ENCODE measurements at regions of chr2 and their contacts with region 1.

Region 1: GRCh38 chr2:152175458-152176325 is at the start of gene STAM2:
- DNase-seq: peak; percentile 79 to 95 (median 93)
- ATAC-seq: peak; percentile 93
- H3K4me3 ChIP-seq: peak within 1 kb of the TSS; percentile 80
- H3K4me3 Mint-ChIP-seq: peak within 1 kb of the TSS; percentile 90 to 99 (median 96)
- H3K27ac ChIP-seq: peak within 1 kb of the TSS; percentile 91
- H3K27ac Mint-ChIP-seq: peak within 1 kb of the TSS; percentile 96 to 99 (median 99)
- H3K4me1 ChIP-seq: peaks cover 0 to 14% of the 10 kb centered on the region in 2 donors
- H3K4me1 Mint-ChIP-seq: peaks cover 22 to 46% (median 36%) of the 10 kb centered on the region in 7 donors
- H3K27me3 ChIP-seq: no peaks in the 10 kb centered on the region
- H3K27me3 Mint-ChIP-seq: peaks cover 0 to 7% (median 2%) of the 10 kb centered on the region in 5 donors
- total RNA-seq, gene STAM2: 12.6 to 22.2 (median 20.0) TPM

Region 2: DNA sequence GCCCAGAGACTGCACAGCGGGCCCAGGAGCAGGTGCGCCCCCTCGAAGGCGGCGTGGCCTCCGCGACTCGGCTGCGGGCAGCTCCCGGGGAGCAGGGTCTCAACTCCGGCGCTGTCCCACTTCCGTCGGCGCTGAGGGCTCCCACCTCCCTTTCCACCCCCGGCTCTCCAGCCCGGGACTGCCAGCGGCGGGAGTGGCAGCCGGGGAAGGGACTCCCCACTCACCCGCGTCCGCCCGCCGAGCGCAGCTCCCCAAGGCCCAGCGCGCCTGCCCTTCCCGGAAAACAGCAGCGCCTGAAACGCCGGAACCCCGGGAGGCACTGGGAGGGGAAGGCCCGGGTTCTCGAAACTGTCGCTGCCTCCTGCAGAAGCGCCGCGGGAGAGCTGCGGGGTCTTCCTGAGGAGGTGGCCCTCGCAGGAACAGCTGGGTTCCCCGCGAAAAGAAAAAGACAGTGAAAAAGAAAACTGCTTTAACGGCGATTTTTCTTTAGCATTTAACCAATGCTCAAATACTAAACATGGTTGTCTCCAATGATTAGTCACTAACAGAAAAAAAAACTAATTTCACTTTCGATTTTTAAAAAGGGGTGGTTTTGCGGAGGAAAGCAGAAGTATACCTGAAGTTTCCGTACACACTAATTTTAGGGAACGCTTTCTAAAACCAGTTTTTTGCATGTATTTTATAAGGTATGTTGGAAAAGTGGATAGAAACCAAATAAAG is 886.2 kb before region 1 on chr2 and contains the start of gene NMI:
- CTCF ChIA-PET with region 1: interaction called, 4 read pairs
- POLR2A ChIA-PET with region 1: interaction called, 3 read pairs
- intact Hi-C with region 1: loop called in 1 of 2 experiments (anchors 5 kb)
- DNase-seq: peak; percentile 47 to 84 (median 80)
- ATAC-seq: peak; percentile 79
- H3K4me3 ChIP-seq: peak within 1 kb of the TSS; percentile 76
- H3K4me3 Mint-ChIP-seq: peak within 1 kb of the TSS; percentile 85 to 99 (median 95)
- H3K27ac ChIP-seq: peak within 1 kb of the TSS; percentile 92
- H3K27ac Mint-ChIP-seq: peak within 1 kb of the TSS; percentile 94 to 100 (median 97)
- H3K4me1 ChIP-seq: peaks cover 18 to 22% of the 10 kb centered on the region in 2 donors
- H3K4me1 Mint-ChIP-seq: peaks cover 33 to 66% (median 48%) of the 10 kb centered on the region in 7 donors
- H3K27me3 ChIP-seq: no peaks in the 10 kb centered on the region
- H3K27me3 Mint-ChIP-seq: no peaks in the 10 kb centered on the region
- total RNA-seq, gene NMI: 14.9 to 69.9 (median 29.3) TPM

Region 3: GRCh38 chr2:151828143-151828889 is 347.4 kb before region 1 on chr2 and contains the start of gene ARL5A:
- CTCF ChIA-PET with region 1: no interaction called
- POLR2A ChIA-PET with region 1: interaction called, 3 read pairs
- intact Hi-C with region 1: loop called (anchors 1 to 2 kb)
- DNase-seq: peak; percentile 89 to 98 (median 96)
- ATAC-seq: peak; percentile 97
- H3K4me3 ChIP-seq: peak within 1 kb of the TSS; percentile 93
- H3K4me3 Mint-ChIP-seq: peak within 1 kb of the TSS; percentile 84 to 97 (median 92)
- H3K27ac ChIP-seq: peak within 1 kb of the TSS; percentile 87
- H3K27ac Mint-ChIP-seq: peak within 1 kb of the TSS; percentile 90 to 96 (median 92)
- H3K4me1 ChIP-seq: peaks cover 18 to 26% of the 10 kb centered on the region in 2 donors
- H3K4me1 Mint-ChIP-seq: peaks cover 30 to 52% (median 40%) of the 10 kb centered on the region in 7 donors
- H3K27me3 ChIP-seq: no peaks in the 10 kb centered on the region
- H3K27me3 Mint-ChIP-seq: peaks cover 0 to 6% (median 0%) of the 10 kb centered on the region in 5 donors
- total RNA-seq, gene ARL5A: 25.8 to 43.3 (median 32.3) TPM

Region 4: DNA sequence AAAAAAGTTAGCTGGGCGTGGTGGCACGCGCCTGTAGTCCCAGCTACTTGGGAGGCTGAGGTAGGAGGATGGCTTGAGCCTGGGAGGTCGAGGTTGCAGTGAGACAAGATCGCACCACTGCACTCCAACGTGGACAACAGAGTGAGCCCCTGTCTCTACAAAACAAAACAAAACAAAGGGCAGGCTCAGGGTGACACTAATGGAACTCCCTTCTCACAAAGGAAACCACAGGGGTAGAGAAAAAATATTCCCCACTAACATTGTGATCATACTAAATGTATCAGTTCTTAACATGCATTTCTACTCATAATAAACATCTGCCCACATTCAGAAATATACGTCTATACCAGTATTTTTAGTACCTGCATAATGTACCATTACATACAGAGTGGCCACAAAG is 21.2 kb before region 1 on chr2:
- CTCF ChIA-PET with region 1: no interaction called
- POLR2A ChIA-PET with region 1: no interaction called
- intact Hi-C with region 1: loop called in 1 of 2 experiments (anchors 1 kb)
- DNase-seq: no peak
- ATAC-seq: no peak
- H3K4me3 ChIP-seq: no peak overlapping the region
- H3K4me3 Mint-ChIP-seq: no peak overlapping the region
- H3K27ac ChIP-seq: no peak overlapping the region
- H3K27ac Mint-ChIP-seq: peak overlapping the region in 1 of 9 donors; percentile 19
- H3K4me1 ChIP-seq: no peaks in the 10 kb centered on the region
- H3K4me1 Mint-ChIP-seq: peaks cover 11 to 42% (median 28%) of the 10 kb centered on the region in 7 donors
- H3K27me3 ChIP-seq: no peaks in the 10 kb centered on the region
- H3K27me3 Mint-ChIP-seq: no peaks in the 10 kb centered on the region

Region 5: DNA sequence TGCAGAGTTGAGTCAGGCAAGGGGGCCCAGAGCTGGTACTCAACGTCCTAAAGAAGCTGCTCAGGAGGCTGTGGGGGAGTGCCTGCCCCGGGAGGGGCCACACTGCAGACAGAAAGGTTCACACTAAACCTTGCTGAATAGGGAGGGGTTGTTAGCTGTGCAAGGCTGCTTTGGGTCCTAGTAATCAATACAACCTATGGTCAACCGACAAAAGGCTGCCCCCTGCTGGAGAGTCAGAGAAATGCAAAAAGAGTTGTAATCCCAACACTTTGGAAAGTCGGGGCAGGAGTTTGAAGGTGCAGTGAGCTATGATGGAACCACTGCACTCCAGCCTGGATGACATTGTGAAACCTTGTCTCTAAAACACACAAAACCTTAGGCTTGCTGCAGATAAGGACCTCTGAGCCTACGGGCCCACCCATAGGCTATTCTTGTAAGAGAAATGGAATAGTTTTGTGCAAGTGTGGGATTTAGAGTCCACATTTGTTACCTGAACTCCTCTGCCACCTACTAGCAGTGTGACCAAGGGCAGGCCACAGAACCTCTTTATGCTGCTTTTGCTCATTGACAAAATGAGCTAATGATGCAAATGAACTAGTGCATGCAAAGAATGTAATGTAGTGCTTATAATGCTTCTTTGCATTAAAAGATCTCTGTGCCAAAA is 460.1 kb after region 1 on chr2:
- CTCF ChIA-PET with region 1: interaction called, 27 read pairs
- POLR2A ChIA-PET with region 1: interaction called, 6 read pairs
- intact Hi-C with region 1: loop called (anchors 1 kb)
- DNase-seq: peak; percentile 14 to 71 (median 49)
- ATAC-seq: peak; percentile 67
- H3K4me3 ChIP-seq: no peak overlapping the region
- H3K4me3 Mint-ChIP-seq: no peak overlapping the region
- H3K27ac ChIP-seq: no peak overlapping the region
- H3K27ac Mint-ChIP-seq: no peak overlapping the region
- H3K4me1 ChIP-seq: no peaks in the 10 kb centered on the region
- H3K4me1 Mint-ChIP-seq: no peaks in the 10 kb centered on the region
- H3K27me3 ChIP-seq: no peaks in the 10 kb centered on the region
- H3K27me3 Mint-ChIP-seq: peaks cover 0 to 4% (median 0%) of the 10 kb centered on the region in 5 donors

Region 6: DNA sequence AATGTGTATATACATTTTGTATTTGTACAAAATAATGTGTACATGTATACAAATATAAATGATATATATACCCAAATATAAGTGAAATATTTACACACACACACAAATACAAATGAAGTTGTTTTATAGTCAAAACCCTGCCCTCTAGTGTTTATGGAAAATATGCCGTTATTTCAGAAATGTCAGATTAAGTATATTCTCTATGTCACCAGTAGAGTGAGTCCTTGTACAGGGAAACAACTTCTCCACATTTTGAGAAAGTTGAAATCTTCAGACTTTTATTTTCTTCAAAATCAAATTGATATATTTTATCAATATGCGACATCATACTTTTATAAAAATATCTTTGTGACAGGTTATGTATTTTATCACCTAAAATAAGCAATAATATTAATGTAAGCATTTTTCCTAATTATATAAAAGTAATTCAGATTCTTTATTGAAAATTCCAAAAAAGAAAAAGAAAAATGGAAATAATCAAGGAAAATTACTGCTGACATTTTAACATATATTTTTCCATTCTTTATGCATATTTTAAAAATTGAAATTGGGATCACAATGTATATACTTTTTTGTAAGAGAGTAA is 565.1 kb after region 1 on chr2:
- CTCF ChIA-PET with region 1: interaction called, 4 read pairs
- POLR2A ChIA-PET with region 1: no interaction called
- intact Hi-C with region 1: loop called (anchors 1 kb)
- DNase-seq: peak in 7 of 9 donors; percentile 13 to 53 (median 51)
- ATAC-seq: peak; percentile 93
- H3K4me3 ChIP-seq: no peak overlapping the region
- H3K4me3 Mint-ChIP-seq: no peak overlapping the region
- H3K27ac ChIP-seq: no peak overlapping the region
- H3K27ac Mint-ChIP-seq: no peak overlapping the region
- H3K4me1 ChIP-seq: no peaks in the 10 kb centered on the region
- H3K4me1 Mint-ChIP-seq: peaks cover 0 to 9% (median 3%) of the 10 kb centered on the region in 7 donors
- H3K27me3 ChIP-seq: no peaks in the 10 kb centered on the region
- H3K27me3 Mint-ChIP-seq: no peaks in the 10 kb centered on the region